Dendritic cell treated with granulocyte-macrophage colony-stimulating factor and Interleukin-4, amounts not matched to agents 40 ng/mL and 50 ng/mL, for 4 days (primary cell): ENCODE measurements at regions of chr2 and their contacts with region 1.

Region 1: DNA sequence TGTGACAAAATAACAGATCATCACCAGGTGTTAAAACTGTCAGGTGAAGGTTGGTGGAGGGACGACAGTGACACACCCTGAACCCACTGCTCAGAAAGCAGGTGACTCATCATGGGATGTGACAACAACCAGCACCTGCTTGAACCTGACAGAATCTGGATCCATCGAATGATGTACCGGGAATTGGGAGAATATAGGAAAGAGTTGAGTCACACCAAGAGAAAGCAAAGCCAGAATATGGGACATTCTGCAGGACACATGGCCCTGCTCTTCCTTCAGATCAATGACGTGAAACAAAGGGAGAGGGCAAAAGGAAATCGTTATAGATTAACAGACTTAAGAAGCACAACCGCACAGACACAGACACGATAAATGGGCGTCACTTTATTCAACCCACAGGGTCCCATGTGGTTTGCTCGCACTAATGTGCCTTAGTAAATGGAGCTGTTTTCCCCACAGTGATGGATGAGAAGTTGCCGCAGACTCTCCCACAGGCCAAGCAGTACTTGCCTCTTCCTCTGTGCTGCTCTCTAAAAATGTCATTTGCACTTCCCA is 100.1 kb downstream of the CRACDL start:
- H3K4me3 Mint-ChIP-seq: no peak overlapping the region
- H3K27ac Mint-ChIP-seq: peak overlapping the region; percentile 63
- H3K4me1 Mint-ChIP-seq: peaks cover 42% of the 10 kb centered on the region
- H3K27me3 Mint-ChIP-seq: no peaks in the 10 kb centered on the region

Region 2: DNA sequence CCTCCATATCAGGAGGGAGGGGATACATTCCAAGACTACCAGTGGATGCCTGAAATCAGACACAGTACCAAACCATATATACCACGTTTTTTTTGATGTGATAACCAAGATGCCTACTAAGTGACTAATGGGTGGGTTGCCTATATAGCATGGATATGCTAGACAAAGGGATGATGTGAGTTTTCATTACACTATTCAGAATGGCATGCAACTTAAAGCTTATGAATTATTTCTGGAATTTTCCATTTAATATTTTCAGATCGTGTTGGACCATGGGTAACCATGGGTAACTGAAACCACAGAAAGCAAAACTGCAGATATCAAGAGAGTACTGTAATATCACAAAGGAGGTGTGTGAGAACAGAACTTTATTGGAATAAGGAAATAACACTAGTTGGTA is 139.7 kb after region 1 on chr2:
- intact Hi-C with region 1: no loop called
- H3K4me3 Mint-ChIP-seq: no peak overlapping the region
- H3K27ac Mint-ChIP-seq: no peak overlapping the region
- H3K4me1 Mint-ChIP-seq: no peaks in the 10 kb centered on the region
- H3K27me3 Mint-ChIP-seq: no peaks in the 10 kb centered on the region

Region 3: GRCh38 chr2:99066075-99066958 is 230.4 kb after region 1 on chr2:
- intact Hi-C with region 1: loop called (anchors 5 kb)
- H3K4me3 Mint-ChIP-seq: no peak overlapping the region
- H3K27ac Mint-ChIP-seq: no peak overlapping the region
- H3K4me1 Mint-ChIP-seq: no peaks in the 10 kb centered on the region
- H3K27me3 Mint-ChIP-seq: no peaks in the 10 kb centered on the region